CD4-positive, alpha-beta T cell (primary cell): ENCODE measurements at regions of chr2 and their contacts with region 1.

Region 1: DNA sequence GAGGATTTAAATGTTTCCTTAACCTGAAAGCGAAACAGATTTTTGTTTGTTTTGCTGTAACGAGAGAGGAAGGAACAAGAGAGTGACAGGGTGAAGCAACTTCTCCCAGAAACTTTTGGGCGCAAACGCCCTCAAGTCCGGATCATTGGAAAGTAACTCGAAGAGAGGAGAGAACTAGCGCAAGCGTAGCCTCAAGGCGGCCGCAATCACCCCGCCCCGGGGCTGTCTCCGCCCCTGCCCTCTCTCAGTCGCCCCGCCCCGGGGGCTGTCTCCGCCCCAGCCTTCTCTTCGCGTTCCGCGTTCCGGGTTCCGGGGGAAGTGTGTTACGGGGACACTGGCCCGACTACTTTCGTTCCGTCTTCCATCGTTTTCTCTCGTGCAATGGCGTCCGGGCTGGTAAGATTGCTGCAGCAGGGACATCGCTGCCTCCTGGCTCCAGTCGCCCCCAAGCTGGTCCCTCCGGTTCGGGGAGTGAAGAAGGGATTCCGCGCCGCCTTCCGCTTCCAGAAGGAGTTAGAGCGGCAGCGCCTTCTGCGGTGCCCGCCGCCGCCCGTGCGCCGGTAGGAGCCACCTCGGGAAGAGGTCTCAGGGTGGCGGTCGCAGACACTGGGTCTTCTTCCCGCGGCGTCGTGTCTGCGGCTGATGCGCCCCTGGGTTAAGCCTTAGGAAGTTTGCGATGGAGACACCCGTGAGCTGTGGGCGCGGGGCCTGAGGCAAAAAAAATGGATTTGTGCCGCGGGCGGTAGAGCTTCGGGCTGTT is at the start of gene MRPL44:
- DNase-seq: peak; percentile 92 to 99 (median 96)
- ATAC-seq: peak; percentile 100
- H3K4me3 ChIP-seq: peak within 1 kb of the TSS; percentile 89
- H3K4me3 Mint-ChIP-seq: peak within 1 kb of the TSS; percentile 94
- H3K27ac ChIP-seq: peak within 1 kb of the TSS; percentile 56 to 58
- H3K27ac Mint-ChIP-seq: peak within 1 kb of the TSS; percentile 93
- H3K4me1 ChIP-seq: peaks cover 31% of the 10 kb centered on the region
- H3K4me1 Mint-ChIP-seq: peaks cover 68% of the 10 kb centered on the region
- H3K27me3 ChIP-seq: no peaks in the 10 kb centered on the region
- H3K27me3 Mint-ChIP-seq: no peaks in the 10 kb centered on the region
- CTCF ChIP-seq: no peak
- total RNA-seq, gene MRPL44: 40.0 to 40.1 TPM

Region 2: GRCh38 chr2:222655787-222656525 is 1301.3 kb before region 1 on chr2 and contains the start of gene FARSB:
- CTCF ChIA-PET with region 1: no interaction called
- POLR2A ChIA-PET with region 1: no interaction called
- intact Hi-C with region 1: loop called in 1 of 2 experiments (anchors 5 kb)
- DNase-seq: peak; percentile 85 to 99 (median 92)
- ATAC-seq: peak; percentile 90
- H3K4me3 ChIP-seq: peak within 1 kb of the TSS; percentile 83
- H3K4me3 Mint-ChIP-seq: peak within 1 kb of the TSS; percentile 96
- H3K27ac ChIP-seq: peak within 1 kb of the TSS; percentile 94 to 99
- H3K27ac Mint-ChIP-seq: peak within 1 kb of the TSS; percentile 99
- H3K4me1 ChIP-seq: peaks cover 28% of the 10 kb centered on the region
- H3K4me1 Mint-ChIP-seq: peaks cover 57% of the 10 kb centered on the region
- H3K27me3 ChIP-seq: no peaks in the 10 kb centered on the region
- H3K27me3 Mint-ChIP-seq: no peaks in the 10 kb centered on the region
- CTCF ChIP-seq: no peak
- total RNA-seq, gene FARSB: 7.8 to 8.7 TPM

Region 3: DNA sequence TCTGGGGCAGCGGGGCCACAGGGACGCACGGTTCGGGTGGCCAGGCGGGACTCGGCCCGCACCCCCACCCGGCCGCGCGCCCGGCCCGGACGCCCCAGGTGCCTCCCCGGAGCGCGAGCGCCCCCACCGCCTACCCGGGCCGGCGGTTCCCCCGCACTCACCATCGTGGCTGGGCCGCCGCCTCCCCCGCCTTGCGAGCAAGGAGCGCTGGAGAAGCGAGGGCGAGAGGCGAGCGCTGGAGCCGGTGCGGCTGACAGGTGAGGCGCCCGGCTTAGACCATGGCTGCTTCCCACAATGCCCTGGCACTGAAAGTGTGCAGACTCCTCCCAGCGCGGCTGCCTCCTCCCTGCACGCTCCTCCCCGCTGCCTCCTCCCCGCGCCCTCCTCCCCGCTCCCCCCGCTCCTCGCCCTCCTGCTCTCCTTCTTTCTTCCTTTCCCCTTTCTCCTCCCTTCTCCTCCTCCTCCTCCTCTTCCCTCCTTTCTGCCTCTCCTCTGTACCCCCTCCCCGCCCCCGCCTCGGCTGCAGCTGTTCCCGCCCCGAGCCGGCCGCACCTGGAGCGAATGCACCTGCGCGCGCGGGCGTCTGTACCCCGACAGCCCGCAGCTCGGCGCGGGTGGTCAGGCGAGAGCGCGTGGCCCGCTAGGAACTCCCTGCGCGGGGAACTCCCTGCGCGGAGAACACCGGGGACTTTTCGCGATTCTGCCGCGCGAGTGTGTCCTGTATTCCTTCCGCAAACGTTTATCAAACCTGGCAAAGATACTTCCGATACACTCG is 119.8 kb before region 1 on chr2 and contains the start of gene AP1S3:
- CTCF ChIA-PET with region 1: no interaction called
- POLR2A ChIA-PET with region 1: no interaction called
- intact Hi-C with region 1: loop called in 1 of 2 experiments (anchors 5 kb)
- DNase-seq: peak; percentile 43 to 94 (median 58)
- ATAC-seq: peak; percentile 91
- H3K4me3 ChIP-seq: peak within 1 kb of the TSS; percentile 70
- H3K4me3 Mint-ChIP-seq: peak within 1 kb of the TSS; percentile 98
- H3K27ac ChIP-seq: peak within 1 kb of the TSS in 1 of 2 donors; percentile 1
- H3K27ac Mint-ChIP-seq: peak within 1 kb of the TSS; percentile 56
- H3K4me1 ChIP-seq: peaks cover 18% of the 10 kb centered on the region
- H3K4me1 Mint-ChIP-seq: peaks cover 12% of the 10 kb centered on the region
- H3K27me3 ChIP-seq: peaks cover 0 to 3% of the 10 kb centered on the region in 2 experiments
- H3K27me3 Mint-ChIP-seq: peaks cover 4% of the 10 kb centered on the region
- CTCF ChIP-seq: no peak
- total RNA-seq, gene AP1S3: 0.50 to 0.71 TPM

Region 4: GRCh38 chr2:223970343-223971128 is 13.3 kb after region 1 on chr2:
- CTCF ChIA-PET with region 1: interaction called, 22 read pairs
- POLR2A ChIA-PET with region 1: interaction called, 7 read pairs
- intact Hi-C with region 1: no loop called
- DNase-seq: peak in 12 of 14 experiments; percentile 14 to 81 (median 40)
- ATAC-seq: peak; percentile 76
- H3K4me3 ChIP-seq: no peak overlapping the region
- H3K4me3 Mint-ChIP-seq: no peak overlapping the region
- H3K27ac ChIP-seq: no peak overlapping the region
- H3K27ac Mint-ChIP-seq: no peak overlapping the region
- H3K4me1 ChIP-seq: no peaks in the 10 kb centered on the region
- H3K4me1 Mint-ChIP-seq: peaks cover 4% of the 10 kb centered on the region
- H3K27me3 ChIP-seq: no peaks in the 10 kb centered on the region
- H3K27me3 Mint-ChIP-seq: no peaks in the 10 kb centered on the region
- CTCF ChIP-seq: peak; percentile 96

Region 5: GRCh38 chr2:225041851-225042799 is 1084.9 kb after region 1 on chr2 and contains the start of gene DOCK10:
- CTCF ChIA-PET with region 1: no interaction called
- POLR2A ChIA-PET with region 1: no interaction called
- intact Hi-C with region 1: loop called in 1 of 2 experiments (anchors 10 kb)
- DNase-seq: peak; percentile 35 to 83 (median 54)
- ATAC-seq: peak; percentile 66
- H3K4me3 ChIP-seq: peak within 1 kb of the TSS; percentile 94
- H3K4me3 Mint-ChIP-seq: peak within 1 kb of the TSS; percentile 100
- H3K27ac ChIP-seq: peak within 1 kb of the TSS; percentile 87
- H3K27ac Mint-ChIP-seq: peak within 1 kb of the TSS; percentile 94
- H3K4me1 ChIP-seq: peaks cover 23% of the 10 kb centered on the region
- H3K4me1 Mint-ChIP-seq: peaks cover 60% of the 10 kb centered on the region
- H3K27me3 ChIP-seq: no peaks in the 10 kb centered on the region
- H3K27me3 Mint-ChIP-seq: no peaks in the 10 kb centered on the region
- CTCF ChIP-seq: no peak
- total RNA-seq, gene DOCK10: 184 to 209 TPM